HepG2 (cell line): ENCODE measurements at regions of chr3 and their contacts with region 1.

Region 1: GRCh38 chr3:2211568-2211967 is 112.9 kb downstream of the CNTN4 start:
- DNase-seq: no peak
- ATAC-seq: no peak
- H3K4me3 ChIP-seq: no peak overlapping the region
- H3K27ac ChIP-seq: no peak overlapping the region
- H3K4me1 ChIP-seq: no peaks in the 10 kb centered on the region
- H3K27me3 ChIP-seq: no peaks in the 10 kb centered on the region
- CTCF ChIP-seq: no peak
- EP300 ChIP-seq: no peak
- POLR2A ChIP-seq: no peak
- RAD21 ChIP-seq: no peak

Region 2: GRCh38 chr3:1699361-1699920 is 512.1 kb before region 1 on chr3:
- CTCF ChIA-PET with region 1: no interaction called
- POLR2A ChIA-PET with region 1: no interaction called
- in situ Hi-C with region 1: no loop called
- intact Hi-C with region 1: no loop called
- DNase-seq: no peak
- ATAC-seq: no peak
- H3K4me3 ChIP-seq: no peak overlapping the region
- H3K27ac ChIP-seq: no peak overlapping the region
- H3K4me1 ChIP-seq: no peaks in the 10 kb centered on the region
- H3K27me3 ChIP-seq: no peaks in the 10 kb centered on the region; a peak in 1 of 5 replicates
- CTCF ChIP-seq: no peak
- EP300 ChIP-seq: no peak
- POLR2A ChIP-seq: no peak
- RAD21 ChIP-seq: no peak

Region 3: GRCh38 chr3:1774597-1774996 is 437.0 kb before region 1 on chr3:
- CTCF ChIA-PET with region 1: no interaction called
- POLR2A ChIA-PET with region 1: no interaction called
- in situ Hi-C with region 1: no loop called
- intact Hi-C with region 1: loop called (anchors 10 kb)
- DNase-seq: no peak
- ATAC-seq: no peak
- H3K4me3 ChIP-seq: no peak overlapping the region
- H3K27ac ChIP-seq: no peak overlapping the region
- H3K4me1 ChIP-seq: no peaks in the 10 kb centered on the region
- H3K27me3 ChIP-seq: no peaks in the 10 kb centered on the region
- CTCF ChIP-seq: no peak
- EP300 ChIP-seq: no peak
- POLR2A ChIP-seq: no peak
- RAD21 ChIP-seq: no peak

Region 4: DNA sequence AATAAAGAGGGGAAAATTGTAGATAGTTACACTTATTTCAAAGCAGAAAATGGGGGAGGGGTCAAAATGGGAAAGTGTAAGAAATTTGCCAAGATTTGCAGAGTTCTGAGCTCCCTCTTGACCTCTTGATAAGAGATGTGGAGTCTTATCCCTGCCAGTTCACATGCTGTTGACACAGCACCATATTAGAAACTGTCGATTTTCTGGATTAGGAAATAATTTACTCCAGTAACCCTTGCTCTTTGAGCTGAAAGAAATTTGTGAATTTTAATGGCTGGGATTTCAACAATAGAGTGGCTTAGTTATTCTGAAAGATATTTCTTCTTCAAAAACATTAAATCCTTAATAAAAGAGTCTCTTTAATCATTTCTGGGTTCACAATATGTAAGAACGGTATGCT is 419.1 kb before region 1 on chr3:
- CTCF ChIA-PET with region 1: no interaction called
- POLR2A ChIA-PET with region 1: no interaction called
- in situ Hi-C with region 1: no loop called
- intact Hi-C with region 1: no loop called
- DNase-seq: no peak
- ATAC-seq: no peak
- H3K4me3 ChIP-seq: no peak overlapping the region
- H3K27ac ChIP-seq: no peak overlapping the region
- H3K4me1 ChIP-seq: no peaks in the 10 kb centered on the region
- H3K27me3 ChIP-seq: no peaks in the 10 kb centered on the region
- CTCF ChIP-seq: no peak
- EP300 ChIP-seq: no peak
- POLR2A ChIP-seq: no peak
- RAD21 ChIP-seq: no peak